Upper lobe of right lung (tissue), 1 donor: ENCODE measurements at regions of chr10 and their contacts with region 1.

Region 1: GRCh38 chr10:71383972-71384687 is 12.6 kb upstream of the CDH23 start:
- DNase-seq: peak; percentile 88
- ATAC-seq: peak; percentile 95
- H3K4me3 ChIP-seq: no peak overlapping the region
- H3K27ac ChIP-seq: no peak overlapping the region
- H3K4me1 ChIP-seq: no peaks in the 10 kb centered on the region
- H3K27me3 ChIP-seq: no peaks in the 10 kb centered on the region
- CTCF ChIP-seq: peak; percentile 92

Region 2: DNA sequence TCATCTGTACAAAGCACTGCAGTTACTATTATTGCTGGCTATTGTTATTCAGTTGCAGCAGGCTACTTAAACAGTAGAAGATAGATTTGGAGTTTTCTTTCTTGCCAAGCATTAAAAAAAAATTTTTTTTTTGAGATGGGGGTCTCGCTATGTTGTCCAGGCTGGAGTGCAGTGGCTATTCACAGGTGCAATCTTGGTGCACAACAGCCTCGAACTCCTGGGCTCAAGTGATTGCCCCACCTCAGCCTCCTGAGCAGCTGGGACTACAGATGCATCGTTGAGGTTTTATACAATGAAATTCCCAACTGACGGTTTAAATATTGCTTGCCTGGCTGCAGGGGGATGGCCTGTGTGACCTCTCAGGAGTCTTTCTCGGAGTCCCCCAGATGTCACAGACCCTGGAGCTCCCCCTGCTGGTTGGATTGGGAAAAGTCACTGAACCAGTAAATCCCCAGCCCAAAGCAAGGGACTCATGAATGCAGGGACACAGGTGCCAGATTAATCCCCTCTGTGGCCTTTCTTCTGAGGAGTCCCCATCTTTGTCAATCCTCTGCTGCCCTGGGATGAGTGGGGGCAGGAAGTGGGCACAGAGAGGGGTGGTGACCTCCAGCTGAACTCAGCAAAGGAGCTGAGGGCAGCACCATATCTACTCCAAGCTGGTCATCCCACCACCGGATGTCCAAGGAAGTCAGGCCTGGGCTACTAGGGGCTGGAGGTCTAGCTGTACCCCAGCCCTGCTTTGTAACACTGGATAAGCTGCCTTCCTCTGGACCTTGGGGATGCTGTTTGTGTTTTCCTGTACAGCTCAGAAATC is 185.9 kb after region 1 on chr10:
- intact Hi-C with region 1: loop called (anchors 10 kb)
- DNase-seq: no peak
- ATAC-seq: peak; percentile 78
- H3K4me3 ChIP-seq: no peak overlapping the region
- H3K27ac ChIP-seq: no peak overlapping the region
- H3K4me1 ChIP-seq: no peaks in the 10 kb centered on the region
- H3K27me3 ChIP-seq: no peaks in the 10 kb centered on the region
- CTCF ChIP-seq: peak; percentile 86

Region 3: DNA sequence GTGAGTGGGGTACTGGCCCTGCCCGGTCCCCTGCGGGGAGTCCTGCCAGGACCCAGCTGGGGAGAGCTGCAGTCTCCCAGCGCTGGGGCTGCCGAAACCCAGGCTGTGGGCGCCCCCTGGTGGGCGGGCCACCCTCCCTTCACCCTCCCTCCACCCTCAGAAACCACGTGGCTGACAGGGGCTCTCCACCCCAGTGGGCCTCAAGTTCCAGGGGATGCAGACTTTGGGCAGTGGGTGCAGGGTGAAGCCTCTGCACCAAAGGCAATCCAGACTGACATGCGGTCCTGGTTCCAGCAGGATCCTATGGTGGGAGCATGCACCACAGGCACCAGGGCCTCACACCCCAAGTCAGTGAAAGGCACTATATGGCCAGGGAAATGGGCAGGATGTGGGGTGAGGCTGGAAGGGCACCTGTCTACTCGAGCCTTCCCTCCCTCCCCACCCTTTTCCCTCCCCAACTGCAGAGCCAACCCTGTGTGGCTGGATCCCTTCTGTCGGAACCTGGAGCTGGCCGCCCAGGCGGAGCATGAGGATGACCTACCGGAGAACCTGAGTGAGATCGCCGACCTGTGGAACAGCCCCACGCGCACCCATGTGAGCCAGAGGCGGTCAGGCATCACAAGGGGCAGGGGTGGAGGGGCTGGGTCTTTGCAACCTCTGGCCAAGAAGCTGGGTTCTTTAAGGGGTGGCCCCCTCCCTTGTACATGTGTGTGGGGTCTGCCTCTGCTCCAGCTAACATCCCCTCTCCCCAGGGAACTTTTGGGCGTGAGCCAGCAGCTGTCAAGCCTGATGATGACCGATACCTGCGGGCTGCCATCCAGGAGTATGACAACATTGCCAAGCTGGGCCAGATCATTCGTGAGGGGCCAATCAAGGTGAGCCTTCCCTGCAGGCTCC is 428.1 kb after region 1 on chr10:
- intact Hi-C with region 1: loop called (anchors 10 kb)
- DNase-seq: peak; percentile 86
- ATAC-seq: peak; percentile 88
- H3K4me3 ChIP-seq: no peak overlapping the region
- H3K27ac ChIP-seq: no peak overlapping the region
- H3K4me1 ChIP-seq: no peaks in the 10 kb centered on the region
- H3K27me3 ChIP-seq: no peaks in the 10 kb centered on the region
- CTCF ChIP-seq: peak; percentile 93